Testis (tissue), 5 donors: ENCODE measurements at regions of chr11 and their contacts with region 1.

Region 1: DNA sequence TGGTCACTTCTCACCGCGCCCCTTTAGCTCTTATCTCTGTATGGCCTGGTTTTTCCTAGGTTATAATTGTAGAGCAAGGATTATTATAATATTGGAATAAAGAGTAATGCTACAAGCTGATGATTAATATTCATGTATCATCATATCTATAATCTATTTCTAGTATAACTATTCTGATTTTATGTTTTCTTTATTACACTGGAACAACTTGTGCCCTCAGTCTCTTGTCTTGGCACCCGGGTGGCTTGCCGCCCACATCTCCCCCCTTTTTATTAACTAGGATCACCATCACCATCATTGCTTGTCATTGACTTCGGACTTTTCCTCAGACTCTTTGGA is 11.0 kb downstream of the OR52K1 start:
- DNase-seq: no peak
- H3K4me3 ChIP-seq: no peak overlapping the region
- H3K27ac ChIP-seq: no peak overlapping the region
- H3K4me1 ChIP-seq: peaks cover 10% of the 10 kb centered on the region
- H3K27me3 ChIP-seq: no peaks in the 10 kb centered on the region
- CTCF ChIP-seq: peak in 1 of 3 experiments; percentile 21
- POLR2A ChIP-seq: no peak

Region 2: GRCh38 chr11:4191031-4191571 is 302.3 kb before region 1 on chr11:
- intact Hi-C with region 1: loop called (anchors 5 kb)
- DNase-seq: peak; percentile 45
- H3K4me3 ChIP-seq: no peak overlapping the region
- H3K27ac ChIP-seq: no peak overlapping the region
- H3K4me1 ChIP-seq: peaks cover 4% of the 10 kb centered on the region
- H3K27me3 ChIP-seq: no peaks in the 10 kb centered on the region
- CTCF ChIP-seq: no peak
- POLR2A ChIP-seq: no peak

Region 3: DNA sequence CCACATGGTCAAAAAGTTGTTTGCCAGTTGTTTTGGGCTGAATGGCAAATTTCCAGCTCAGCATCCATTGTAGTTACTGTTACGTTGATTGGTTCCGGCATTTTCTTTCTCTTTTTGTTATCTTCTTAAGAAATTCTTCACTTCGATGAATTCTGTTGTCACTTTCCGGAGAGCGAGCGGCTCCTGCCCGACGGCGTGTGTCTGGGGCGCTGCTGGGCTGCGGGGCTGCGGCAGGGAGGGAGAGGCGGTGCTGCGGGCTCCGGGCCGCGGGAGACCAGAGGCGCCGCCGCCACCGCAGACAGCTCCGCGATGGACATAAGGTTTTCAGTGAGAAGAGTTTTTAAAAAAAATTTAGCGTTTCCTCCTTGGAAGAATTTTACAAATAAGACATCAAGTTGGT is 281.5 kb before region 1 on chr11:
- intact Hi-C with region 1: no loop called
- DNase-seq: no peak
- H3K4me3 ChIP-seq: peak overlapping the region in 1 of 2 donors; percentile 2
- H3K27ac ChIP-seq: no peak overlapping the region
- H3K4me1 ChIP-seq: no peaks in the 10 kb centered on the region
- H3K27me3 ChIP-seq: no peaks in the 10 kb centered on the region
- CTCF ChIP-seq: no peak
- POLR2A ChIP-seq: no peak